ENCODE measurements at regions of chr15 and their contacts with region 1.

Region 1: DNA sequence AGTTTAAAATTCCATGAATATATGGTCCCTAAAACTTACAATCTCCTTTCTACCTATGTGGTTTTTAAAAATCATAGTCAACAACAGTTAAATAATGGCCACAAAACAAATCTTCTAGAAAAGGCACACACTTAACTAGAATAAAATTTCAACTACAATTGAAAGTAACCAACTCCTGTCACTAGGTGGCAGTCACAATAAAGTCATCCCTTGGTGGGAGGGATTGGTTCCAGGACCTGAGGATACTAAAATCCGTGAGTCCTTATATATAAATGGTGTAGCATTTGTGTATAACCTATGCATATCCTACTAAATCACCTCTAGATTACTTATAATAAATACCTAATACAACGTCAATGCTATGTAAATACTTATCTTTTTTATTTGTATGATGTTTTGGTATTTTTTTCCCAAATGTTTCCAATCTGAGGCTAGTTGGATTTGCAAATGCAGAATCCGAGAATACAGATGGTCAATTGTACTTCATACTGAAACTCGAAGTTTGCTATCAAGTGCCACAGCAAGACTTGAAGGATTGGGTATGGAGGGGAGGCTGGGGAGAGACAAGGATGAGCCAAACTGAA is 172.6 kb downstream of the FMN1 start:
- DNase-seq: no peak
- H3K4me3 ChIP-seq: no peak overlapping the region
- H3K27ac ChIP-seq: peak overlapping the region in 3 of 4 donors; percentile 51 to 65 (median 64)
- H3K4me1 ChIP-seq: peaks cover 8 to 22% (median 11%) of the 10 kb centered on the region in 3 donors
- H3K27me3 ChIP-seq: no peaks in the 10 kb centered on the region
- CTCF ChIP-seq: peak; percentile 17 to 67 (median 54)
- POLR2A ChIP-seq: no peak

Region 2: DNA sequence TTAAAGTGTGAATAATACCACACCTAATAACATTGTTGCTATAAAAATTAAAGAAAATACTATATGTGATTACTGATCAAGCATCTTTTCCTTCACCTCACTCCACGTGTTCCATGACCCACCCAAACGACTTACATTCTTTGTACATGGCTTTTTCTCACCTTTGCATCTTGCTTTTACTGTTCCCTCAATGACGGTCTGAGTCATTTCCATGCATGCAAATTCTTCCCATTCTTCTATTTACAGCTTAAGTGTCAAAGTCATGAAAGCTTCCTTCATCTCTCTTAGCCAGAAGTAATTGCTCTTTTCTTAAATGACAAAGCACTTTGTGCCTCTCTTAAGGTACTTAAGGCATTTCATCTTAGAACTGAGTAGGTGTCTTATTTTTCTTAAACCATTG is 240.1 kb before region 1 on chr15:
- intact Hi-C with region 1: no loop called
- DNase-seq: no peak
- H3K4me3 ChIP-seq: no peak overlapping the region
- H3K27ac ChIP-seq: no peak overlapping the region
- H3K4me1 ChIP-seq: no peaks in the 10 kb centered on the region
- H3K27me3 ChIP-seq: no peaks in the 10 kb centered on the region
- CTCF ChIP-seq: no peak
- POLR2A ChIP-seq: no peak

Region 3: DNA sequence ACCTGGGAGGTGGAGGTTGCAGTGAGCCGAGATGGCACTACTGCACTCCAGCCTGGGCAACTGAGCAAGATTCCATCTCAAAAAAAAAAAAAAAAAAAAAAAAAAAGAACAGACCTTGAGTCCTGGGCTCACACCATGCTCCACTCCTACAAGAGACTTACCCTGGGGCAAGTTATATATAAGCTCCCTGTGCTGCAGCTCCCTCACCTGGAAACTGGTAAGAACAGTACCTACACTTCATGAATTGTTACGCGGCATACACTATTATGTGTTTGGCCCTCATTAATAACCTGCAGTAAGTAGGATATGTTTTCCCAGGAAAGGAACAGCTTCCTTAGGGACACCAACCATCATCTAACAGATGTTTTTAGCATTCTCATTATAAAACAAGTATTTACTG is 53.0 kb after region 1 on chr15:
- intact Hi-C with region 1: loop called (anchors 5 kb)
- DNase-seq: no peak
- H3K4me3 ChIP-seq: no peak overlapping the region
- H3K27ac ChIP-seq: no peak overlapping the region
- H3K4me1 ChIP-seq: no peaks in the 10 kb centered on the region
- H3K27me3 ChIP-seq: no peaks in the 10 kb centered on the region
- CTCF ChIP-seq: peak in 2 of 6 experiments; percentile 26 to 48
- POLR2A ChIP-seq: no peak

Region 4: GRCh38 chr15:33114374-33114717 is 92.4 kb after region 1 on chr15:
- intact Hi-C with region 1: no loop called
- DNase-seq: no peak
- H3K4me3 ChIP-seq: no peak overlapping the region
- H3K27ac ChIP-seq: no peak overlapping the region
- H3K4me1 ChIP-seq: peaks cover 0 to 48% (median 0%) of the 10 kb centered on the region in 3 donors
- H3K27me3 ChIP-seq: no peaks in the 10 kb centered on the region
- CTCF ChIP-seq: no peak
- POLR2A ChIP-seq: no peak